Activated B cell treated with CpG ODN at 0.5 μM for 24 hours (primary cell): ENCODE measurements at regions of chr14 and their contacts with region 1.

Region 1: DNA sequence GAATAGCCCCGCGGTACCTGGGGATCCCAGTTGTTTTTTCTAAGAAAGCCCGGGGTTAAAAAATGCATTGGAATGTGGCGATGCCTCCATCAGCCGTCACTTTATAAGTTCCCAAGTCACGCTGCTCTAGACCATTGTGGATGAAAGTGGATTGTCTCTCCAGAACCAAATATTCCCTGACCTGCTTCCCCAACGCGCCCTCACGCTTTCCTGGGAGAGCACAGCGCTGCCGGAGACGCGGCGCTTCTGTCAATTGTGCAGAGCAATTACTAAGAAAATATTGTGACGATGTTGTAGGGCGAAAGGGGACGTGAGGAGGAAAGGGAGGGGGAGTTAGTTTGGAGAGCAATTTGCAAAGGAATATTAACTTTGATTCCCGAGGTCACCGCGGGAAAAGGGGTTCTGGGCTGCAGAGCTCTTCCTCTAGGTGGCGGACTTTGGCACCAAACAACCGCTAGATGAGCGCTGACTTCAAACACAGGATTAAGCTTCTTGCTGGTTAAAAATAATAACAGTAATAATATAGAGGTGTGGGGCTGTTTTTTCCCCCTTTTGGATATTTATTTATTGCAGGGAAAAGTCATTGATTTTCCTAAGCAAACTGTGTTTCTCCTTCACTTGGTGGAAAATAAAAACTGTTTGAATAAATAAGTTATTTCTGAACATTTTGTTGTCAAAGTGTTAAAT is 9.6 kb upstream of the FOXG1 start:
- DNase-seq: no peak
- ATAC-seq: no peak
- H3K4me3 Mint-ChIP-seq: no peak overlapping the region
- H3K27ac Mint-ChIP-seq: no peak overlapping the region
- H3K4me1 Mint-ChIP-seq: no peaks in the 10 kb centered on the region
- H3K27me3 Mint-ChIP-seq: peaks cover 66% of the 10 kb centered on the region
- CTCF ChIP-seq: no peak

Region 2: DNA sequence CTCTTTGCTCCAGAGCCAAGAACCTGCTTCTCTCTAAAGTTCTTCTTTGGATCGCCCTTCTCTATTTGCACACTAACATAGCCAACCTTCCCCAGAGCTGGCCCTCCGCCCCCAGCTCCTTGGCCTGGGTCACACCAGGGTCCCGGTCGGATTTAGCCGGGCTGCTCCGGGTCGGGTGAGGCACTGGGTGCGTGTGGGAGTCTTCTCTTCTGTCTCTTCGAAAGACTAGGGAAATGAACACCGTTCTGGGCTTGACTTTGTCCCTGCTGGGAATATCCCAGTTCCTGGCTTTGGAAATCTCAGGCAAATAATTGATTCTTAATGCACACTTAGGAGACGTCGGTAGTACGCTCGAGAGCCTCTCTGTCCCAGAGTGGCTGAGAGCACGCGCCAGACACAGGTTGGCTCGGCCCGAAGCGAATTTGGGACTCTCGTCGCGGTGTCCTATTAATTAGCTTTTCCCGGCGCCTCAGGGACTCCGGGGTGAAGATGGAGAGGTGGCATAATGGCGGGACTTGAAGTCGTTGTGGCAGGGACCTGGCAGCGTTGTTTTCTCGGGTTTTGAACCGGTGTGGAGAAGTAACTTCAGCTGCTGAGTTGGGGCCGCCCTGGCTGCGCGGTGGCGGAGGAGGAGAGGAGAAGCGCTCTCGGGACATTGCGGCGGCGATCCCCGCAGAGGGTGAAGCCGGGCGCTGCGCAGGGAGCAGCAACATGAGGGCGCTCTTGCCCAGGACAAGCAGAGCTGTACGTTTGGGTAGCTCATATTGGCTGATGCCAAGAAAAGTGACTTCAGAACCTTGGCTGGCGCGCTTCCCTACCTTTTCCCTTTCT is 17.0 kb after region 1 on chr14:
- CTCF ChIA-PET with region 1: interaction called, 4 read pairs
- POLR2A ChIA-PET with region 1: no interaction called
- intact Hi-C with region 1: loop called (anchors 2 kb)
- DNase-seq: no peak
- ATAC-seq: no peak
- H3K4me3 Mint-ChIP-seq: no peak overlapping the region
- H3K27ac Mint-ChIP-seq: no peak overlapping the region
- H3K4me1 Mint-ChIP-seq: peaks cover 3% of the 10 kb centered on the region
- H3K27me3 Mint-ChIP-seq: peaks cover 58% of the 10 kb centered on the region
- CTCF ChIP-seq: no peak